MCF 10A (cell line): ENCODE measurements at regions of chr4 and their contacts with region 1.

Region 1: DNA sequence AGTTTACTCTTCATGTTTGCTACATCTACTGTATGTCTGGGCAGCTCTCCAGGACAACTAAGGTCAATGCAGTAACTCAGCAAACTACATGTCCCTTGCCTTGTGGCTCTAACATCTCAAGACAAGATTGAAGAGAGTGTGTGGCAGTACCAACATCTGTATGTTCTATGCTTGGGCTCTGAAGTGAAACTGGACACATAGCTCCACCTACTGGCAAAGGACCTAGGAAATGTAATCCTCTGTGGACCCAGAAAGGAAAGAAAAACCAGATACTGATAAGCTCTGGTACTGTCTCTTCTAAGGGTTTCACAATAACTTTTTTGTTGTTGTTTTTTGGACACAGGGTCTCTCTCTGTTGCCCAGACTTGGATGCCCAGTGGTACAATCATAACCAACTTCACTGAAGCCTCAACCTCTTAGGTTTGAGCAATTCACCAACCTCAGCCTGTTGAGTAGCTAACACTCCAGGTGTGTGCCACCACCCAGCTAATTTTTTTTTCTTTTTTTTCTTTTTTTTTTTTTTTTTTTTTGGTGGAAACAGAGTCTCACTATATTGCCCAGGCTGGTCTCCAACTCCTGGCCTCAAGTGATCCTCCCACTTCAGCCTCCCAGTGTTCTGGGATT is 64.1 kb downstream of the QDPR start:
- DNase-seq: peak; percentile 84
- H3K4me3 Mint-ChIP-seq: no peak overlapping the region
- H3K27ac Mint-ChIP-seq: no peak overlapping the region
- H3K4me1 Mint-ChIP-seq: peaks cover 17% of the 10 kb centered on the region
- H3K27me3 Mint-ChIP-seq: no peaks in the 10 kb centered on the region
- CTCF ChIP-seq: peak; percentile 70

Region 2: GRCh38 chr4:16443504-16444088 is 1004.2 kb before region 1 on chr4:
- CTCF ChIA-PET with region 1: no interaction called
- POLR2A ChIA-PET with region 1: no interaction called
- intact Hi-C with region 1: loop called (anchors 10 kb)
- DNase-seq: peak; percentile 65
- H3K4me3 Mint-ChIP-seq: no peak overlapping the region
- H3K27ac Mint-ChIP-seq: no peak overlapping the region
- H3K4me1 Mint-ChIP-seq: no peaks in the 10 kb centered on the region
- H3K27me3 Mint-ChIP-seq: peaks cover 83% of the 10 kb centered on the region
- CTCF ChIP-seq: peak; percentile 63

Region 3: GRCh38 chr4:16916719-16917337 is 531.0 kb before region 1 on chr4:
- CTCF ChIA-PET with region 1: no interaction called
- POLR2A ChIA-PET with region 1: no interaction called
- intact Hi-C with region 1: loop called (anchors 5 kb)
- DNase-seq: peak; percentile 81
- H3K4me3 Mint-ChIP-seq: no peak overlapping the region
- H3K27ac Mint-ChIP-seq: no peak overlapping the region
- H3K4me1 Mint-ChIP-seq: no peaks in the 10 kb centered on the region
- H3K27me3 Mint-ChIP-seq: no peaks in the 10 kb centered on the region
- CTCF ChIP-seq: peak; percentile 94

Region 4: GRCh38 chr4:17055788-17056187 is 392.0 kb before region 1 on chr4:
- CTCF ChIA-PET with region 1: no interaction called
- POLR2A ChIA-PET with region 1: no interaction called
- intact Hi-C with region 1: no loop called
- DNase-seq: peak; percentile 89
- H3K4me3 Mint-ChIP-seq: no peak overlapping the region
- H3K27ac Mint-ChIP-seq: no peak overlapping the region
- H3K4me1 Mint-ChIP-seq: peaks cover 12% of the 10 kb centered on the region
- H3K27me3 Mint-ChIP-seq: no peaks in the 10 kb centered on the region
- CTCF ChIP-seq: no peak

Region 5: DNA sequence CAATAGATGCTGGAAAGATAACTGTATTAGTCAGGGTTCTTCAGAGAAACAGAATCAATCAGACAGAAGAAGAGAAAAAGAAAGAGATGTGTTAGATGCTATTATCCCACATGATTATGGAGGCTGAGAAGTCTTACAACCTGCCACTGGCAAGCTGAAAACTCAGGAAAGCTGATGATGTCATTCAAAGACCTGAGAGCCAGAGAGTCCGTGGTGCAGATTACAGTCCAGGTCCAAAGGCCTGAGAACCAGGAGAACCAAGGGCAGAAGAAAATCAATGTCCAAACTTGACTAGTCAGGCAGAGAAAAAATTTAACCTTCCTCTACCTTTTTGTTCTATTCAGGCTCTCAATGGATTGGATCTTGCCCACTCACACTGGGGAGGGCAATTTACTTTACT is 108.4 kb before region 1 on chr4:
- CTCF ChIA-PET with region 1: interaction called, 110 read pairs
- POLR2A ChIA-PET with region 1: no interaction called
- intact Hi-C with region 1: loop called (anchors 5 kb)
- DNase-seq: no peak
- H3K4me3 Mint-ChIP-seq: no peak overlapping the region
- H3K27ac Mint-ChIP-seq: no peak overlapping the region
- H3K4me1 Mint-ChIP-seq: peaks cover 15% of the 10 kb centered on the region
- H3K27me3 Mint-ChIP-seq: peaks cover 11% of the 10 kb centered on the region
- CTCF ChIP-seq: no peak

Region 6: GRCh38 chr4:17376205-17376604 is 71.6 kb before region 1 on chr4:
- CTCF ChIA-PET with region 1: interaction called, 17 read pairs
- POLR2A ChIA-PET with region 1: no interaction called
- intact Hi-C with region 1: no loop called
- DNase-seq: peak; percentile 61
- H3K4me3 Mint-ChIP-seq: no peak overlapping the region
- H3K27ac Mint-ChIP-seq: no peak overlapping the region
- H3K4me1 Mint-ChIP-seq: peaks cover 11% of the 10 kb centered on the region
- H3K27me3 Mint-ChIP-seq: no peaks in the 10 kb centered on the region
- CTCF ChIP-seq: no peak

Region 7: DNA sequence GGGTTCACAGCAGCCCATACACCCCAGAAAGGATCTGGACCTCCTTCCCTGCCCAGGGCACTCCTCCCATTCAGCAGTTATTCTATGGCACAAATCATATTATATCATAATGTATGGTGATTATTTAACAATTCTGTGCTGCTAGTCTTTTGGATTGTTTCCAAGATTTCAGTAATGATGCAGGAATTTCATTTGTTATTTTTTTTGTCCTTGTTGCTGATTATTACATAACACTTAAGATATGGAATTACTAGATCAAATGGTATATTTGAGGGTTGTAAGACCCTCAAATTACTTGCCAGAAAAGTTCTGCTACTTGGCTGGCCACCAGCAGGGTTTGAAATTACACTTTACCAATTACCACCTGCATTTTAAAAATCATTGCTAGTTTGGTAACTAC is 27.7 kb after region 1 on chr4:
- CTCF ChIA-PET with region 1: interaction called, 81 read pairs
- POLR2A ChIA-PET with region 1: no interaction called
- intact Hi-C with region 1: no loop called
- DNase-seq: peak; percentile 37
- H3K4me3 Mint-ChIP-seq: no peak overlapping the region
- H3K27ac Mint-ChIP-seq: no peak overlapping the region
- H3K4me1 Mint-ChIP-seq: peaks cover 7% of the 10 kb centered on the region
- H3K27me3 Mint-ChIP-seq: no peaks in the 10 kb centered on the region
- CTCF ChIP-seq: no peak